ENCODE measurements at regions of chr17 and their contacts with region 1.

Region 1: GRCh38 chr17:29148790-29149430 is 31.3 kb downstream of the MYO18A start:
- DNase-seq: peak; percentile 94
- H3K4me3 Mint-ChIP-seq: peak overlapping the region; percentile 65
- H3K27ac Mint-ChIP-seq: peak overlapping the region; percentile 68
- H3K4me1 Mint-ChIP-seq: peaks cover 55% of the 10 kb centered on the region
- H3K27me3 Mint-ChIP-seq: no peaks in the 10 kb centered on the region

Region 2: DNA sequence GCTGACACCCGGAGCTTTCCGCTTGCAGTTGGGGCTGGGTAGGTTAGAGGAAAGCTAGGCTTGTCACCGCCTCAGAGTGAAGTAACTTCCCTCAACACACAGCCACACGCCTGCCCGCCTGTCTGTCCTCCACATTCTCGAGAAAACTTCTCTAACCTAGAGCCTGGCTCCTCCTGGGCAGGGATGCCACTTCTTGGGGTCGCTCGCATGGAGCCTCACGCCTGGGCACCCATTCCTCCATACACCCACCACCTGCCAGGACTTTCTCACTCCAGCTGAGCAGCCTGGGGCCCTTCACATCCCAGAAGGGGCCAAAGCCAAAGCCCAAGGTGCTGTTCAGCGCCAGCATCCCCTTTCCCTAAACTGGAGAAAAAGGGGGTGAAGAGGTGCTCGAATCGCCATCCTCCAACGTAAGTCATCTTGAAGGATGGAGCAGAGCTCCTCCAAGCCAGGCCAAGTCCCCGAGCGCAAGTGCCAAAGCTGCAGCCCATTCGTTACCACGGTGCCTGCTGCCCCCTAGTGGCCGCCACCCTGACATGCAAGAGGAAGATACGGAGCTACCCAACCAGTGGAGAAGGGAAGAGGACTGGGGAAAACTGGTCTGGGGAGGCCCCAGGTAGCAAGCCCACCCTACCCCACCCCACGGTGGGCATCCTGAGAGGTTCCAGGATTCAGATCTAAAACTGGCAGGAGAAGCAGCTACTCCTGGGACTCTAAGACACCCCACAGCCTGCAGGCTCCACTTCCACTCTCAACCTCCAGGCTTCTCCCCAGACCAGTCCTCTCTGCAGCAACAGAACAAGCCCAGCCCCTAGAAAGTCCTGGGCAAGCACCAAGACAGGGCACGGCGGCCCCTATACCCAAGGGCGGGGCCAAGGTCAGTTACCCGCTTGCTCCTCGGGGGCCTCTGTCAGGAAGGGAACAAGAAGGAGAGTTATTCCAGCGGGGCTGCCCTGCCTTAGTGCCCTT is 31.8 kb before region 1 on chr17:
- CTCF ChIA-PET with region 1: interaction called, 286 read pairs
- POLR2A ChIA-PET with region 1: interaction called, 3 read pairs
- DNase-seq: peak; percentile 80
- H3K4me3 Mint-ChIP-seq: no peak overlapping the region
- H3K27ac Mint-ChIP-seq: no peak overlapping the region
- H3K4me1 Mint-ChIP-seq: peaks cover 4% of the 10 kb centered on the region
- H3K27me3 Mint-ChIP-seq: no peaks in the 10 kb centered on the region

Region 3: DNA sequence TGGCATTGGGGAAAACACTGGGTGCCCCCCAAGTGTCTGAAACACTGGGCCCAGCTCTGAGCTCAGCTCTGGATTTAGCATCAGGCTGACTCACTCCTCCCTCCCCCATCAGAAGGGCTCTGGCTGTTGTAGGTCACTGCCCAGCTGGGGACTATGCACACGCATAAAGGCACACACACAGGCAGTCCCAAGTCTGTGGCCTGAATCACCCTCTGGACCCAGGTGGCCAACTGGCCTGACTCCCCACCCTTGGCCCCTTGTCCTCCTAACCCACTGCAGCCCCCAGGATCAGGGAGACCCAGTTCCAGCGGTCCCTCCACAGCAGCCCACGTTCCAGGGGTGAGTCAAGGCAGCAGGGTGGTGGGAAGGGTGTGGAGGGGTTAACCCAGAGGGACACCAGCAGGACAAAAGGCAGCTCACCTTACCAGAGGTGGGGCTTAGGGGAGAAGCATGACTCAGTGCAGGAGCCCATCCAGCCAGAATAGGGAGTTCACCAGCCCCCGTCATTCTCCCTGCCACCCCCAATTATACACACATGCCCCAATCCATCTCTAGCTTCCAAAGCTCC is 15.7 kb before region 1 on chr17:
- CTCF ChIA-PET with region 1: interaction called, 69 read pairs
- POLR2A ChIA-PET with region 1: interaction called, 48 read pairs
- DNase-seq: no peak
- H3K4me3 Mint-ChIP-seq: no peak overlapping the region
- H3K27ac Mint-ChIP-seq: no peak overlapping the region
- H3K4me1 Mint-ChIP-seq: peaks cover 61% of the 10 kb centered on the region
- H3K27me3 Mint-ChIP-seq: no peaks in the 10 kb centered on the region

Region 4: DNA sequence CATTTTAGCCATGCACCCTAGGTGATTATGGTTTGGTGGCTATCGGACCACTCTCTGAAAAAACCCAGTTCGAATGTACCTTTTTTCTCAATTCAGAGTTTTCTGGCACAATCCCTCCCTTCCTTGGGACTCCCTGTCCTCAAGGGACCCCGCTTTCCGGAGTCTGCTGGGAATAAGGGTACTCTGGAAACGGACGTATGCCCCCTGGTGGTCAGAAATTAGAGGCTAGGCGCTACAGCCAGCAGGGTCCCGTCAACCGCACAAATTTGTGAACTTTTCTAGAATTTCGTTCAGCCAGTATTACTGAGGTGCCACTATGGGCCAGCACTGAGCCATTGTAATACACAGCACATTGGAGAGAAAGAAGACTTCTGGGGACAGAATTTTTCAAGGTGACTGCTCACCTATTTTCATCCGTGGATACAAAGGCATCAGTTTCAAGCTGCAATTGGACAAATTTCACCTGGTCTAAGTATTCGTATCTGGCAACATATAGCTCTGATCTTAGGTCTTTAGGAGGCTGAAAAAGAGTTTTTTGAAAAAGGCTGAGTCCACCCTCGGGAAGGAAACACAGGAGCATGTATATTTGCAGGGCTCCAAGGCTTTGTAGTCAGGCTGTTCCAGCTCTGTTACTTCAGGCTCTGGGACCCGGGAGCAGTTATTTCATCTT is 70.6 kb after region 1 on chr17:
- CTCF ChIA-PET with region 1: interaction called, 163 read pairs
- POLR2A ChIA-PET with region 1: interaction called, 9 read pairs
- DNase-seq: peak; percentile 72
- H3K4me3 Mint-ChIP-seq: no peak overlapping the region
- H3K27ac Mint-ChIP-seq: no peak overlapping the region
- H3K4me1 Mint-ChIP-seq: peaks cover 6% of the 10 kb centered on the region
- H3K27me3 Mint-ChIP-seq: peaks cover 4% of the 10 kb centered on the region

Region 5: GRCh38 chr17:29293890-29294579 is 145.1 kb after region 1 on chr17 and contains the start of gene NUFIP2:
- CTCF ChIA-PET with region 1: interaction called, 50 read pairs
- POLR2A ChIA-PET with region 1: interaction called, 45 read pairs
- DNase-seq: peak; percentile 99
- H3K4me3 Mint-ChIP-seq: peak within 1 kb of the TSS; percentile 98
- H3K27ac Mint-ChIP-seq: peak within 1 kb of the TSS; percentile 99
- H3K4me1 Mint-ChIP-seq: peaks cover 32% of the 10 kb centered on the region
- H3K27me3 Mint-ChIP-seq: no peaks in the 10 kb centered on the region
- total RNA-seq, gene NUFIP2: 60.1 to 65.3 TPM